Caki2 (cell line): ENCODE measurements at regions of chr12 and their contacts with region 1.

Region 1: DNA sequence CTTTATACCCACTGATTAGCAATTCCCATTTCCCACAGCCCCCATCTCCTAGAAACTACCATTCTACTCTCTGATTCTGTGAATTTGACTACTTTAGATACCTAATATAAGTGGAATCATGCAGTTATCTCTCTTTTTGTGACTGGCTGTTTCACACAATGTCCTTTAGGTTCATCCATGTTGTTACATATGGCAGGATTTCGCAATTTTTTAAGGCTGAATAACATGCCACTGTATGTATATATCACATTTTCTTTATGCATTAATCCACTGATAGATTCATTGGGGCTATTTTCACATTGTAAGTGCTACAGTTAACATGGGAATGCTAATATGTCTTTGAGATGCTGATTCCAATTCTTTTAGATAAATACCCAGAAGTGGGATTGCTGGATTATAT is 11.8 kb upstream of the TBK1 start:
- DNase-seq: no peak

Region 2: DNA sequence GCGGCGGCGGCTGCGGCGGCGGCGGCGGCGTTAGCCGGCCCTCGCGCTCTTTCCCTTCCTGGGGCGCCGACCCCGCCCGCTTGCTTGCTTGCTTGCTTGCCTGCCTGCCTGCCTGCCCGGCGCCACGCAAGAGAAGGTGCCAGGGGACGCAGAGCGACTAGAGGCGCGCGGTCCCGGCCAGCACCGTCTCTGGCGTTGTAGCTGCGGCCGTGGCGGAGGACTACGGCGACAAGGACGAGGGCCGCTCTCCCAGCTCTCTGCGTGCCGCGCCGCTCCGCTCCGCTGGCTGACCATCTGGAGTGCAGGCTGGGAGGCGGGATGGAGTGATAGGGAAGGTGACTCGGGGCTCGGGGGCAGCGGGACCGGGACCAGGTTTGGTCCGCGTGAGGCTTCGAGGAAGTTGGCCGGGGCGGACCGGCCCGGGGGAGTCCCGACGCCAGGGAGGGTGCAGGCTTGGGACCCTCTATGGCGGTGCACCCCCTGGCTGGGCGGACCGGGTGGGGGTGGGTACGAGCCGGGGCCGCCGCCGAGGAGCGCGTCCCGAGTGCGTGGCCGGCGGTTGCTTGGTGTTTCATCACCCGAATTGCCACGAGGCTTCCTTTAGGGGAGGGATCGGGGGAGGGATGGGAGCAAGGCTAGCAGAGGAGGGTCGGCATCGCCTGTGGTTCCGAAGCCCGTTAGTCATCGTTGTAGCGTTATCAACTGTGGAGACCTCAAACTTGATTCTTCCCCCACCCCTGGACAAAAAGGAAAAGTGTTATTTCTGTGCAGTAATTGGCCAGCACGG is 35.4 kb before region 1 on chr12:
- in situ Hi-C with region 1: loop called (anchors 5 kb)
- DNase-seq: peak; percentile 82

Region 3: DNA sequence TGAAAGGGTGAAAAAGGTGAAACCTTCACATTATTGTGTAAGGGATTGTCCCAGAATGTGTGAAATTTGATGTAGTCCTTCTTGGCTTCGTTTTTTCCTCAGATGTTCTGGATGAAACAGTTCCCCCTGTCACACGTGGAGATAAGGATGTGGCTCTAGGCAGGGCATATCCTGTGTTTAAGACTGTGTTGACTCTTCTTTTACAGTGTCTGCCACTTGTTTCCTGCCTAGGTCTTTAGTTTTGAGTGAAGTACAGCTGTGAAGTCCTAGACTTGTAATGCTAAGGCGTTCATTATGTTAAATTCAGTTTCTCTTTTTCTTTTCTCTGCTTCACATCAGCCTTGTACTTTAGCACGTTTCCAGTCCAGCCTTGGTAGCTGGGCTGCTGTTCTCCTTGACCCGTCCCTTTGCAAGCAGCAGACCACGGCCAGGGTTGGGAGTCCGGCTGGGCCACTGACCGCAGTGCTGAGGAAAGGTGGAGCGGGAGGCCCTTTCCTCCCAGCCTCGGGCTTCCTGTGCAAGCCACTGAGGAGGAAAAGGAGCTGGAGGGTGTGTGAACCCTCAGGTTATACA is 229.3 kb after region 1 on chr12:
- in situ Hi-C with region 1: no loop called
- DNase-seq: peak; percentile 65